Left cardiac atrium (tissue), 4 donors: ENCODE measurements at regions of chr9 and their contacts with region 1.

Region 1: GRCh38 chr9:36166101-36166927 is 2.9 kb upstream of the CCIN start:
- DNase-seq: peak; percentile 84
- ATAC-seq: peak; percentile 91 to 94

Region 2: DNA sequence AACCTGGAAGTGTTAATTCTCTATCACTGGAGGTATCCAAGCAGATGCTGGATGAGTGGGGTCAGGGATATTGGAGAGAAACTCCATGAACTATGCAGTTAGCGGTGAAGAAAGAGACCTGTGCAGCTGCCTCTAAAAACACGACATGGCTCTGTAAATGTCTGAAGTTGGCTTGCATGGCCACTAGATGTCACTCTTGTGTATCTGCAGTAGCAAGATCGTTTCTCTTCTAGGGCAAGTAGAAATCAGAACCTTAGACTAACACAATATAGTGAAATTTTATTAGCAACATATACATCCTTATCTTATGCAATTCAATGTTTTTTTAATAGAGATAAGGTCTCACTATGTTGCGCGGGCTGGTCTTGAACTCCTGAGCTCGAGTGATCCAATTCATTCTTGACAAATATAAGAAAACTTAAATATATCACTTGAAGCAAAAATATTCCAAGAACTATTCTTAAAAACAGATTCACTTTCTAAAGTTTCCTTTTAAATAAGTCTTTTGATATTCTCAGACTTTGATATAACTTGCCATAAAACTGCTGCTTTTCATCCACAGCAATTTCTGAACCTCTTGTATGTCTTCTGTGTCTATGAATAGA is 211.3 kb before region 1 on chr9:
- intact Hi-C with region 1: loop called in 1 of 2 experiments (anchors 10 kb)
- DNase-seq: peak; percentile 53
- ATAC-seq: peak; percentile 73 to 82

Region 3: DNA sequence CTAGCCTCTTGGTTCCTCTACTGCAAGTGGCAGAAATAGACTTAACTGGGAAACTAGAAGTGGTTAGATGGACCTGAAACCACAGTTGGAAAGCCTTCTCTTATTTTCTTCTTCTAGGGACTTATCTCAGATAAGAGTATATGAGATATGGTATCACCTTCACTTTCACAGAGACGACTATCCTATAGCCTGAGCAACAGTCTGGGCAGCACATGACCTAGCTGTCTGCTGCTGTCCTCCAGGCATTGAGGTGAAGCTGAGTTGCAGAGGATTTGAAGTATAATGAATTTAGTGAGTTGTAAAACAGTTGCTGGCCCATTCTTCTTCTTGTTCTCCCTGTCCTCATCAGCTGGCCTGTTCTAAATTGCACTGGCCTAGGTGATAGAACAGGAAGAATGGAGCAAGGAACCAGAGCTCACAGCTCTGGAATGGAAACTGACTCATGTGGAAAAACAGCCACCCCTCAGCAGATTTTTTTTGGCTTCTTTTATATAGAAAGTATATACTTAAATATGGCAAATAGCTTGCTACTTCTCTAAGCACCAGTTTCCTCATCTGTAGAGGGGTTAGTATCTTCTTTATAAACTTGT is 101.8 kb before region 1 on chr9:
- intact Hi-C with region 1: no loop called
- DNase-seq: no peak
- ATAC-seq: peak in 1 of 2 donors; percentile 53

Region 4: DNA sequence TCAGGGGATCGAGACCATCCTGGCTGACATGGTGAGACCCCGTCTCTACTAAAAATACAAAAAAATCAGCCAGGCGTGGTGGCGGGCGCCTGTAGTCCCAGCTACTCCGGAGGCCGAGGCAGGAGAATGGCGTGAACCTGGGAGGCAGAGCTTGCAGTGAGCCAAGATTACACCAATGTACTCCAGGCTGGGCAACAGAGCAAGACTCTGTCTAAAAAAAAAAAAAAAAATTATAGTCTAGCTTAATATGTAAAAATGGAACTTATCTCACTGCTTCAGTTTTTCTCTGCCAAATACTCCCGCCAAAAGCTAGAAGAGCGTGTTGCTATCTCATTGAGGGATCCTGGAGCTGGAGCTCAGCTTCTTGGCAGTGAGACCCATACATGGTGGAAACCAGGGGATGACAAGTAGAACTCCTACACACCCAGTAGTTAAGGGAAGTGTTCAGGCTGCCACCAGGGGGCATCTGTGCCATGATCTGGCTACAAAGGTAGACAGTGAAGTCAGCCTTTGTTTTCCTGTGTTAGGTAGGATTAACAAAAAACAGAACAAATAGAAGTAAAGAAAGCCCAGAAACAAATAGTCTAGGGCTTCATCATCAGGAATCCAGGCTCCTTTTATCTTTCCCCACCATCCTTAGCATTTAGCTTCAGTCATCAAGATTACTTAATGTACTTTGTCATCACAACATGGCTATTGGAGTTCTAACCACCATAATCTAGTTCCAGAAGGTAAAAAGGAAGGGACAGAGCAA is 63.4 kb before region 1 on chr9:
- intact Hi-C with region 1: loop called (anchors 1 to 10 kb)
- DNase-seq: peak; percentile 80
- ATAC-seq: peak; percentile 90 to 93